GM23248 (cell line): ENCODE measurements at regions of chr5 and their contacts with region 1.

Region 1: DNA sequence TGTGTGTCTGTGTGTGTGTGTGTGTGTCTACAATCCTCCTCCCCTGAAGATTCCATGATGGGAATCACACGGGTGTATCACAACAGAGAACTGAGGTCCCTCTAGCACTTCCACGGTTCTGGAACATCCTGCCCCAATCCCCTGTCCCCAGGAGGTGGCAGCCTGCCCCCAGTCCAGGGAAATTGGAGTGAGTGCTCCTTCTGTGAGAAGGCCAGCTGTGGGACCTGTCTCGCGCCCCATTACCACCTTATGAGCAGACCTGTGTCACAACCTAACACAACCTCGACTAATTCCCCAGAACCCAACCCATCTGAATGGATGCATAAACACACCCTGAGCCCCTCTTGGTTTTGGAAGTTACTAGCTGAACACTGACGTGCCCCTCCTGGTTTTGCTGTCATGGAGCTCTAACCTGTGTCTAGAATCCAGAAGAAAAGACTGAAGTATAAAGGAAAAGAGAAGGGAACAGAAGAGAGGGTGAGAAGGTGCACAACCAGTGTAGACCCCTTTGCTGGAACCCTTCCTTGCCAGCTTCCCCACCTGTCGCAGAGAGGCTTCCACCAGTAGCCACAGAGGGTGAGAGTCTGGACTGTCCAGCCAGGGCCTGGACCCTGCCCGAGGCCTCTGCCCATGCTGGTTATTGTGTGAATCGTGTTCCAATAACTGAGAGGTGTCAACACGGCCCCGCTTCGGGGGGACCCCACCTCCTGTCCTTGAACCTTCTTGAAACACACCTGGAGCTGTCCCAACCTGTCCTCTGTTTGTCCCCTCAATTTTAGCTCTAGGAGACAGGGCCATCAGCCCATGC is 3.4 kb downstream of the BTNL9 start:
- DNase-seq: no peak
- H3K4me3 ChIP-seq: no peak overlapping the region
- H3K27ac ChIP-seq: no peak overlapping the region
- H3K4me1 ChIP-seq: no peaks in the 10 kb centered on the region
- H3K27me3 ChIP-seq: peaks cover 27% of the 10 kb centered on the region

Region 2: DNA sequence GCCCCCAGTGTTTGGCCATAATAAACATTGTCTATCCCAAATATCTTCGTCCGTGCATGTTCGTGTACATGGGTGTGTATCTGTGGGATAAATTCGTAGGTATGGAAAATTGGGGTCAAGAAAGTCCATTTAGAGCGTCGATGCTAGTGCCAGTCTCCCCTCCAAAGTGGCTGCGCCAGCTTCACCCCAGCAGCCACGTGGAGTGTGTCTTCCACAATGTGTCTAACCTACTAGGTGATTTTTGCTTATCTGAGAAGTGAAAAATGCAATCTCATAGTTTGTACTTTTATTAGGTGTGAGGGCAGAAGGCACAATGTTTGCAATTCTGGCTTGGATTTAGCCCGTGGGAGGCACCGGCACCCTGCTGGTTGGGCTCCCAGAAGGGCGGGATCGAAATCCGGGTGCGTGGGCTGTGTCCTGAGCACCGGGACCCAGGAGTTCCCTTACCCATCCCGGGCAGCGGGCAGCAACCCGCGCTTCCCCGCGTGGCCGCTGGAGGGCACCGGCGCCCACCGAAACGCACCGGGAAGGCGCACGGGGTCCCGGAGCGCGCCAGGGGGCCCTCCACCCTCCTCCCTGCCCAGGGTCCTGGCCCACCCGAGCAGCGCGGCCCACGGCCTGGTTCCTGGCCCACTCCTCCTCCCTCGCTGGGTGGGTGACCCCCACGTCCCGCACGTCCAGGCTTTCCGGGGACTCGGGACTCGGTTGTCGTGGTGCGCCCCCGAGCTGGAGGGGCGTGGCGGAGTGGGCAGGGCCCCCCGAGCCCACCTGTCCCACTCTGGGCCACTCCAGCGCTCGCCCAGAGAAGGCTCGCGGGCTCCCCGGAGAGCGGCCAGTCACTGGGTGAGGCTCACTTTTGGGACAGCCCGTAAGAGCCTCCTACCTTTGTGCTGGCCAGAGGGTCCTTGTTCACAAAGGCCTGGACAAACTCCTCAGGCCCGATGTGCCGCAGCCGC is 916.5 kb before region 1 on chr5:
- in situ Hi-C with region 1: loop called (anchors 25 kb)
- DNase-seq: peak; percentile 24
- H3K4me3 ChIP-seq: no peak overlapping the region
- H3K27ac ChIP-seq: no peak overlapping the region
- H3K4me1 ChIP-seq: no peaks in the 10 kb centered on the region
- H3K27me3 ChIP-seq: peaks cover 23% of the 10 kb centered on the region

Region 3: DNA sequence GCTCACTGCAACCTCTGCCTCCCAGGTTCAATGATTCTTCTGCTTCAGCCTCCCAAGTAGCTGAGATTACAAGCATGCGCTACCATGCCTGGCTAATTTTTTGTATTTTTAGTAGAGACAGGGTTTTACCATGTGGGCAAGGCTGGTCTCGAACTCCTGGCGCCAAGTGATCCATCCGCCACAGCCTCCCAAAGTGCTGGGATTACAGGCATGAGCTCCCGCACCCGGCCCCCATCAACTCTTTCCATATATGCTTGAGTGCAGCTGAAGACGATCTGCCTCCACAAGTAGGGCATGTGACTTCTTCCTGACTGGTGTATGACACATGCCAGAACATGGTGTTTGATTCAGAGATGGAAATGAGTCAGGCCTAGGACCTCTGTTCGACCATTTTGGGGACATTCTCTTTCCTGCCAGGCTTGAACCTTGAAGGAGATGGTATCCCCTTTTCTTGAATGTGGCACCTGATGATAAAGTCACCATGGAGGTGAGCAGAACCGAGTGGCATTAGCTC is 556.8 kb before region 1 on chr5:
- in situ Hi-C with region 1: no loop called
- DNase-seq: peak; percentile 43
- H3K4me3 ChIP-seq: no peak overlapping the region
- H3K27ac ChIP-seq: no peak overlapping the region
- H3K4me1 ChIP-seq: no peaks in the 10 kb centered on the region
- H3K27me3 ChIP-seq: no peaks in the 10 kb centered on the region

Region 4: DNA sequence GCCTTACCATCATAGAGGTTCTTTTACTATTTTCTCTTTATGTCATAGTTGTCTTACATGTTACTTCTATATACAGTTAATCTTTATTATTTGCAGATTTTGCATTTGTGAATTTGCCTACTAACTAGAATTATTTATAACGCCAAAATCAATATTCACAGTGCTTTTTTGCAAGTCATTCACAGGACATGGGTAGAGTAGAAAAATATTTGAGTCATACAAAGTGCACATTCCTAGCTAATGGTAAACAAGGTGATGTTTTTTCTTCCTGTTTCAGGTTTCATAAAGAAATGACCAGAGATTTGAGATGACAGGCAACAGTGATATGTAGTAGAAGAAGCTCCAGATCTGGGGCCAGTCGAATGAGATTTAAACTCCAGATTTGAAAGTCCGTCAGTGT is 273.7 kb before region 1 on chr5:
- in situ Hi-C with region 1: loop called (anchors 25 kb)
- DNase-seq: no peak
- H3K4me3 ChIP-seq: no peak overlapping the region
- H3K27ac ChIP-seq: no peak overlapping the region
- H3K4me1 ChIP-seq: no peaks in the 10 kb centered on the region
- H3K27me3 ChIP-seq: no peaks in the 10 kb centered on the region

Region 5: DNA sequence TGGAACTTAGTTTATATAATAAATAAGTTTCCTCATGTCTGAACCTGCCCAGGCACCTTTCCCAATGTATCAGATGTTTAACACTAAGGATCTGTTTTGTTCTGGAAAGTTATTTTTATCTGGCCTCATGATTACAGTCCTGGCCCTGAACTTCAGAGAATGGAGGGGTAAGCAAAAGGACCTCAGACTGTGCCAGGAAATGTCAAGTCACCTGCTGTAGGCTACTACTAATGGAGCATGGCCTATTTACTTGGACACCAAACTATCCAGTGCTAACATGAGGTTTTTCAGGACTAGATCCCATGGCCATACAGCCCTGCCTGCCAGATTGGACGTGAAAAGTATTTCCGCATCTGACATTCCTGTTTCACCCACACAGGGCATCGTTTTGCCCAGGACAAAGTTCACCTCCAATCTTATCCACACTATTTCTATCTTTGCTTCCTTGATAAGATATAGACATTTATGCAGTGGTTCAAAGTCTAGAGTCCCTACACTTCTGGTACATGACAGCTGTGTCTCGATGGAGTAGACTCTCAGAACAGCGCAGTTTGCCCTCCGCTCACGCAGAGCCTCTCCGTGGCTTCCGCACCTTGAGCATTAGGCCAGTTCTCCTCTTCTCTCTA is 144.8 kb before region 1 on chr5 and contains the start of gene BTNL8:
- in situ Hi-C with region 1: no loop called
- DNase-seq: no peak
- H3K4me3 ChIP-seq: no peak within 1 kb of the TSS
- H3K27ac ChIP-seq: no peak within 1 kb of the TSS
- H3K4me1 ChIP-seq: no peaks in the 10 kb centered on the region
- H3K27me3 ChIP-seq: no peaks in the 10 kb centered on the region
- total RNA-seq, gene BTNL8: not detected in 2 replicates

Region 6: DNA sequence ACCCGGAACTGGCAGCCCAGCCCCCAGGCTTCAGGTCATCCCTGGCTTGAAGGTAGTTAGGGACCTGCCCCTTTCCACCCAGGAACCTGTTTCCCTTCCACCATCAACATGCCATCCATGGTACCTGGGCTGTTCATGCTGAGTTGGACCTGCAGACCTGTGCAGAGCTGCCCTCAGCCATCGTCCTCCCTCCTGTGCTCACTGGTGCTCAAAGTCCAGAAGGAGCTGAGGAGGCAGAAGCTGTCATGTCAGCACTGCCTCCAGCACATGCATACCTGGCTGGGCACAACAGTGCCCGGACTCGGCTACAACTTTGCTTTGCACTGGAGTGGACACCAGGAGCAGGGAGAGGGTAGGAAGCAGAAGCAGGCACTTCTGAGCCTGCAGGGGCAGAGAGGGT is 108.3 kb before region 1 on chr5:
- in situ Hi-C with region 1: loop called (anchors 25 kb)
- DNase-seq: no peak
- H3K4me3 ChIP-seq: no peak overlapping the region
- H3K27ac ChIP-seq: no peak overlapping the region
- H3K4me1 ChIP-seq: no peaks in the 10 kb centered on the region
- H3K27me3 ChIP-seq: no peaks in the 10 kb centered on the region